ENCODE measurements at regions of chr10 and their contacts with region 1.

Region 1: GRCh38 chr10:51960494-51960895 is 261.1 kb upstream of the CSTF2T start:
- DNase-seq: peak; percentile 76
- ATAC-seq: peak; percentile 66
- H3K4me3 ChIP-seq: no peak overlapping the region
- H3K27ac ChIP-seq: no peak overlapping the region
- H3K4me1 ChIP-seq: no peaks in the 10 kb centered on the region
- H3K27me3 ChIP-seq: no peaks in the 10 kb centered on the region
- CTCF ChIP-seq: peak; percentile 63
- POLR2A ChIP-seq: no peak
- RAD21 ChIP-seq: peak; percentile 73

Region 2: GRCh38 chr10:50981904-50982303 is 978.6 kb before region 1 on chr10:
- CTCF ChIA-PET with region 1: no interaction called
- POLR2A ChIA-PET with region 1: no interaction called
- dilution Hi-C with region 1: no loop called
- in situ Hi-C with region 1: no loop called
- intact Hi-C with region 1: no loop called
- DNase-seq: no peak
- ATAC-seq: no peak
- H3K4me3 ChIP-seq: no peak overlapping the region
- H3K27ac ChIP-seq: no peak overlapping the region
- H3K4me1 ChIP-seq: no peaks in the 10 kb centered on the region
- H3K27me3 ChIP-seq: no peaks in the 10 kb centered on the region
- CTCF ChIP-seq: no peak
- POLR2A ChIP-seq: no peak
- RAD21 ChIP-seq: no peak

Region 3: GRCh38 chr10:51524041-51524440 is 436.5 kb before region 1 on chr10:
- CTCF ChIA-PET with region 1: no interaction called
- POLR2A ChIA-PET with region 1: no interaction called
- dilution Hi-C with region 1: no loop called
- in situ Hi-C with region 1: no loop called
- intact Hi-C with region 1: loop called (anchors 10 kb)
- DNase-seq: peak; percentile 79
- ATAC-seq: peak; percentile 82
- H3K4me3 ChIP-seq: no peak overlapping the region
- H3K27ac ChIP-seq: no peak overlapping the region
- H3K4me1 ChIP-seq: peaks cover 6% of the 10 kb centered on the region
- H3K27me3 ChIP-seq: no peaks in the 10 kb centered on the region
- CTCF ChIP-seq: no peak
- POLR2A ChIP-seq: no peak
- RAD21 ChIP-seq: no peak

Region 4: GRCh38 chr10:51910189-51910588 is 50.3 kb before region 1 on chr10:
- CTCF ChIA-PET with region 1: no interaction called
- POLR2A ChIA-PET with region 1: no interaction called
- dilution Hi-C with region 1: no loop called
- in situ Hi-C with region 1: no loop called
- intact Hi-C with region 1: no loop called
- DNase-seq: peak; percentile 12
- ATAC-seq: no peak
- H3K4me3 ChIP-seq: no peak overlapping the region
- H3K27ac ChIP-seq: no peak overlapping the region
- H3K4me1 ChIP-seq: no peaks in the 10 kb centered on the region; the same call in 1 of the 2 replicates
- H3K27me3 ChIP-seq: no peaks in the 10 kb centered on the region
- CTCF ChIP-seq: no peak
- POLR2A ChIP-seq: no peak
- RAD21 ChIP-seq: no peak

Region 5: DNA sequence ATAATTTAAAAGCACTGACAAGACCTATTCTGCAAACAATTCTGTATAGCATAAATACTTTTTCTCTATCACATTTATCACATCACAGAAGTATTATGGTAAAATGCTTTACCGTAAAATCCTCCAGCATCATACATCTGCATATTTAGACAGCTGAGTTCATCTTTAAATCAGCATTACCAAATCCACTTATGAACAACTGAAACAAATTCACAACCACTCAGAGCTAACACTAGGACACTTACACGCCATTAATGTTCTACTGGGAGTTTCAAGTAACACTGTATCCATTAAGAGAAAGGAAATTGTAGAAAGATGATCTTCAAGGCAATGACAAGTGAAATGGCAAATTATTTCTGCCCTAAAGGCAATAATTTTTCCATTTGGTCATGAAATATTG is 247.9 kb after region 1 on chr10:
- CTCF ChIA-PET with region 1: no interaction called
- POLR2A ChIA-PET with region 1: no interaction called
- dilution Hi-C with region 1: no loop called
- in situ Hi-C with region 1: no loop called
- intact Hi-C with region 1: no loop called
- DNase-seq: no peak
- ATAC-seq: no peak
- H3K4me3 ChIP-seq: no peak overlapping the region
- H3K27ac ChIP-seq: no peak overlapping the region
- H3K4me1 ChIP-seq: no peaks in the 10 kb centered on the region
- H3K27me3 ChIP-seq: no peaks in the 10 kb centered on the region
- CTCF ChIP-seq: no peak
- POLR2A ChIP-seq: no peak
- RAD21 ChIP-seq: no peak